Endothelial cell of umbilical vein (primary cell): ENCODE measurements at regions of chr1 and their contacts with region 1.

Region 1: GRCh38 chr1:24714859-24715520 is 30.3 kb upstream of the CLIC4 start:
- DNase-seq: no peak
- H3K4me3 ChIP-seq: no peak overlapping the region
- H3K27ac ChIP-seq: no peak overlapping the region
- H3K4me1 ChIP-seq: peaks cover 10% of the 10 kb centered on the region
- H3K27me3 ChIP-seq: no peaks in the 10 kb centered on the region
- CTCF ChIP-seq: no peak
- POLR2A ChIP-seq: no peak

Region 2: DNA sequence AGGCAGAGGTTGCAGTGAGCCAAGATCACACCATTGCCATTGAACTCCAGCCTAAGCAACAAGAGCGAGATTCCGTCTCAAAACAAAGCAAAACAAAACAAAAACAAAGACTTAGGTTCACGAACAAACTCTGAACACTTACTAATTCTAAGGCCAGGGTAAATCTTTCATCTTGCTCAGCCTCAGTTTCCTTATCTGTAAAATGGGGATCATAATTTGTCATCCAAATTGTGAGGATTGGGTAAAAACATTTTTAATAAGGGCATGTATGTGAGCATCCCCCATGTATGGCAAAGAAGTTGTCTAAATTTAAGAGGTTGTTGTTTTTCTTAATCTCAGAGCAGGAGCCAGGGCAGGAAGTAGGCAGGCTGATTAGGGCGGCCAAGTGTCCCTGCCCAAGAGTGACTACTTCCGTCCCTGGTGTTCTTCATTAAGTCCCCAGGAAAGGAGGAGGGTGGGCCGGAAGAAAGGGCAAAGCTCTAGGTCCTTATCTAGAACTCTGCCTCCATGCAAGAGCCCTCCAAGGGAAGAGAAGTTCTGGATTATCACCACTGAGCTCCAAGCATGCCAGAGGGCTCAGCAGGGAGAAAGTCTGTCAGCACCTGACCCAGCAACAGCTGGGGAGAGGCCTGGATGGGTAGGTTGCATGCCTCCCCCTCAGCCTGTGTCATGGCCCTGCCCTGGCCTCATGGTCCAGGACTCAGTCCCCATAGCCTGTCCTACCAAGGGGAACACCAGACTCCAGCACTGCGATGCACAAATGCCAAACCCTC is 19.6 kb before region 1 on chr1:
- CTCF ChIA-PET with region 1: no interaction called
- POLR2A ChIA-PET with region 1: no interaction called
- dilution Hi-C with region 1: no loop called
- intact Hi-C with region 1: no loop called
- DNase-seq: no peak
- H3K4me3 ChIP-seq: no peak overlapping the region
- H3K27ac ChIP-seq: no peak overlapping the region
- H3K4me1 ChIP-seq: peaks cover 19% of the 10 kb centered on the region
- H3K27me3 ChIP-seq: no peaks in the 10 kb centered on the region
- CTCF ChIP-seq: no peak
- POLR2A ChIP-seq: no peak

Region 3: DNA sequence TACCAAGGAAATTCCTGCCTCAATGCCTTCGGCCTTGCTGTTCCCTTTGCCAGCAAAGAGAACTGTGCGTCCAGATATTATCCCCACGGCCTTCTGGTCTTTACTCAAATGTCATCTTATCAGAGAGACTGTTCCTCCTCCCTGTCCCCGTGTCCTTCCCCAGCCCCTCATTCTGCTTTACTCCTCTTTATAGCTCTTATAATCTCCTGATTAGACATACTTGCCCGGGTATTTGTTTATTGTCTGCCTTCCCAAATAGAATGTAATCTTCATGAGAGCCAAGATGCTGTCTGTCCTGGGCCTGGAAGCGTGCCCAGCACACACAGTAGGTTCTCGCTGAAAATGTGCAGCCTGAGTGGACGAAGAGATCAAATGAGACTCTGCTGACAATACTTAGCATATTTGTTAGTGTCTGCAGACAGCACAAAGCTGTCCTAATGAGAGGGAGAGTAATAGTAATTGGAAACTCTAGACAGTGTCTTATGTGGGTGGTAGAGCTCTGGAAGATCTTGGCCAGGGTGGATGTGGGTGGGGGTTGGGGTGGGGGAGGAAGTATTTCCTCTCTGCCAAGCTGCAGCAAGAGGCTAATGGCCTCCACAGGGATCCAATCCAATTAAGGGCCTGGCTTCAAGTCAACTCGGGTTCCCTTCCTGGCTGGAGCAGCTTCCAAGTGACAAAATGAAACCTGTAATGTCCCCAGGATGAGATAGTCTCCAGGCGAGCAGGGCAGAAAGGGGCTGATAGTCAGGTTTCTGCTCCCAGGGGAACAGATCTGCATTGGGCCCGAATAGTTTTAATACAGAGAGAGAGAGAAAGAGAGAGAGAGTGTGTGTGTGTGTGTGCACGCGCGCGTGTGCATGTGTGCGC is 20.8 kb after region 1 on chr1:
- CTCF ChIA-PET with region 1: interaction called, 6 read pairs
- POLR2A ChIA-PET with region 1: interaction called, 11 read pairs
- dilution Hi-C with region 1: no loop called
- intact Hi-C with region 1: no loop called
- DNase-seq: peak; percentile 22
- H3K4me3 ChIP-seq: no peak overlapping the region
- H3K27ac ChIP-seq: no peak overlapping the region
- H3K4me1 ChIP-seq: peaks cover 5% of the 10 kb centered on the region
- H3K27me3 ChIP-seq: no peaks in the 10 kb centered on the region
- CTCF ChIP-seq: no peak
- POLR2A ChIP-seq: no peak